IMR-90 (cell line): ENCODE measurements at regions of chr3 and their contacts with region 1.

Region 1: DNA sequence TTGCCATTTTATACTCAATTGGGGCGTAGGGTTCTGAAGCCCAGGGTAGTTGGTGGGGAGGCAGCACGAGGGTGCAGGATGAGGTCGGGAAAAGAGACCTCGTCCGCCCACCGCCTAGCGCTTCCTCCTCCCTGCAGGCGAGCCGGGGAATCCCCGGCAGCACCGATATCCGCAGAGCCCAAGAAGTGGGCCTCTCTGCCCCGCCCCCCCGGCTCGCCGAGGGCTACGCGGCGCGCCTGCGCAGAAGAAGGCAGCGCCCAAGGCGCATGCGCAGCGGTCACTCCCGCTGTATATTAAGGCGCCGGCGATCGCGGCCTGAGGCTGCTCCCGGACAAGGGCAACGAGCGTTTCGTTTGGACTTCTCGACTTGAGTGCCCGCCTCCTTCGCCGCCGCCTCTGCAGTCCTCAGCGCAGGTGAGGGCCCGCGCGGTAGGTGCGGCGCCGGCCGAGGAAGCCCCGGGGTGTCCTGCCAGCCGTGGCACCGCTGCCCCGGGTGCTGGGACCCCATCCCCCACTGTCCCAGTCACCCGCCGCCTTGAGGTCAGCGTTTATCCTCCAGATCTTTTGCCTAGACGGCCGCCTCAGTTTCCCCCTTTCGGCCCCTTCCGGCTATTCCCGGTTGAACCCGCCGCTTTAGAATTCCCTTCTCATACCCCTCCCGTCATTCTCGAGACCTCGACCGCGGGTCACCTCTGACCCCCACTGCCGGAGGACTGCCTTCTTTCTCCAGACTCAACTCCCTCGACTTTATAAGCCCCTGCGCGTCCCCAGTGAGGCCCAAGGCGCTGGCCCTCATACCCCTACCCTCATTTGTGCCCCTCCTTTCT is at the start of gene ALAS1:
- DNase-seq: peak; percentile 82
- ATAC-seq: peak; percentile 84
- H3K4me3 ChIP-seq: peak within 1 kb of the TSS; percentile 85
- H3K27ac ChIP-seq: peak within 1 kb of the TSS; percentile 81
- H3K4me1 ChIP-seq: peaks cover 36% of the 10 kb centered on the region
- H3K27me3 ChIP-seq: no peaks in the 10 kb centered on the region
- CTCF ChIP-seq: no peak
- POLR2A ChIP-seq: peak; percentile 91
- RAD21 ChIP-seq: no peak
- total RNA-seq, gene ALAS1: 29.7 and 32.8 TPM in 2 replicates

Region 2: DNA sequence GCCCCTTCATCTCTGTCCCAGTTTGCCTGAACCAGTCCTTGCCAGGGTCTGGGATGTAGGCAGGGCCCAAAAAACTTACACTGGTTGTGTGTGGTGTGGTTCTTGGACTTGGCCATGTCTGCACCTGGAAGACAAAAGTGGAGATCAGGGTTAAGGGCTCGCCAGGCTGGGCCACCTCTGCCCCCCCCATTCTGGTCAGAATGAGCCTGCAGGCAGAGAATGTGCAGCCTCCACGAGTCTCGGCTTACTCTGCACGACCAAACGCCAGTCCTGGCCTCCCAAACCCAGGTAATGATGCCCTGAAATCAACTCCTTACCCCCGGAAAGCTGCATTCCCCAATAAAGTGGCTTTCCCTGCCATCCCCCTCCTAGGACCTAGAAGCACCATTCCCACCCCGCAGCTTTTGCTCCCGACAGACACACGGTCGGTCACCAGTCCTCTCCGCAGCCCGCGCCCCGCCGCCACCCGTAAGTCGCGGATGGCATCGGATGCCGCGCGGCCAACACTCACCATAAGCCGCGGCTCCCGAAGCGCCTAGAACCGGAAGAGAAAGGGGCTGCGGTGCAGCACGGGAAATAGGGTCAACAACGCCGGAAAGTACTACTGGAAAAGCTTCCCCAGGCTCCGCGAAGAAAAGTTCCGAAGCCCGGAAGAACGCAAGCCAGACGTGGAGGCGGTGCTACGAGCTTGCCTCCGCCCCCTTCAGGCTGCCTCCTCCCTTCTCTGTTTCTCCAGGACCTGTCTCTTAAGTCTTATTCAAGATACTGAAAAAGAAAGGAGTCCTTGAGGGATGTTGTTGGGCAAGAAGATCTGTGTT is 202.5 kb before region 1 on chr3 and contains the start of gene RPL29:
- CTCF ChIA-PET with region 1: no interaction called
- POLR2A ChIA-PET with region 1: no interaction called
- dilution Hi-C with region 1: no loop called
- in situ Hi-C with region 1: no loop called
- intact Hi-C with region 1: loop called (anchors 5 kb)
- DNase-seq: peak; percentile 94
- ATAC-seq: peak; percentile 96
- H3K4me3 ChIP-seq: peak within 1 kb of the TSS; percentile 77
- H3K27ac ChIP-seq: peak within 1 kb of the TSS; percentile 78
- H3K4me1 ChIP-seq: peaks cover 5% of the 10 kb centered on the region
- H3K27me3 ChIP-seq: no peaks in the 10 kb centered on the region
- CTCF ChIP-seq: no peak
- POLR2A ChIP-seq: peak; percentile 94
- RAD21 ChIP-seq: 0 out of 2 replicates have a peak, but pooled peaks have one; percentile 12
- total RNA-seq, gene RPL29: 1,798 and 2,081 TPM in 2 replicates

Region 3: GRCh38 chr3:52154117-52155094 is 43.6 kb before region 1 on chr3 and contains the start of gene POC1A:
- CTCF ChIA-PET with region 1: no interaction called
- POLR2A ChIA-PET with region 1: no interaction called
- dilution Hi-C with region 1: no loop called
- in situ Hi-C with region 1: no loop called
- intact Hi-C with region 1: loop called (anchors 5 kb)
- DNase-seq: peak; percentile 98
- ATAC-seq: peak; percentile 96
- H3K4me3 ChIP-seq: peak within 1 kb of the TSS; percentile 74
- H3K27ac ChIP-seq: peak within 1 kb of the TSS; percentile 92
- H3K4me1 ChIP-seq: peaks cover 5% of the 10 kb centered on the region
- H3K27me3 ChIP-seq: no peaks in the 10 kb centered on the region
- CTCF ChIP-seq: no peak
- POLR2A ChIP-seq: no peak
- RAD21 ChIP-seq: peak; percentile 16; the same call in 1 of the 2 replicates
- total RNA-seq, gene POC1A: 8.3 and 10.6 TPM in 2 replicates

Region 4: DNA sequence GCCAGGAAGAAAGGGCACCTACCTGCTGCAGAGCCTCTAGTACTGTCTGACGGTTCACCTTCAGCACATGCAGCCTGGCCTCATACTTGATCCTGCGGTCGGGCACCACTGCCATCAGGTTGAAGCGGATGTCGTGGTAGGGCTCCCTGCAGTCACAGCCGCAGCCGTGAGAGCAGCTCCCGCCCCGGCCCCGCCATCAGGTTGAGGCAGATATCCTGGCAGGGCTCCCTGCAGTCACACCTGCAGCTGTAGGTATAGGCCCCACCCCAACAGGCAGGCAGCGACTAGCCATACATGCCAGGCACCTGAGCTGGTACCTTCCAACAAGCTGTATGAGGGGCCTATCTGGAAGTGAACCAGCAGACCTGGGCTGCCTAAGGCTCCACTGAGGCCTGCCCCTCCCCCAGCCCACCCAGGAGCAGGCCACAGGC is 208.2 kb after region 1 on chr3:
- CTCF ChIA-PET with region 1: no interaction called
- POLR2A ChIA-PET with region 1: no interaction called
- dilution Hi-C with region 1: no loop called
- in situ Hi-C with region 1: no loop called
- intact Hi-C with region 1: no loop called
- DNase-seq: no peak
- ATAC-seq: no peak
- H3K4me3 ChIP-seq: no peak overlapping the region
- H3K27ac ChIP-seq: no peak overlapping the region
- H3K4me1 ChIP-seq: peaks cover 10% of the 10 kb centered on the region; the same call in 1 of the 2 replicates
- H3K27me3 ChIP-seq: no peaks in the 10 kb centered on the region
- CTCF ChIP-seq: no peak
- POLR2A ChIP-seq: no peak
- RAD21 ChIP-seq: no peak